Adrenal gland (tissue), 19 donors: ENCODE measurements at regions of chr10 and their contacts with region 1.

Region 1: DNA sequence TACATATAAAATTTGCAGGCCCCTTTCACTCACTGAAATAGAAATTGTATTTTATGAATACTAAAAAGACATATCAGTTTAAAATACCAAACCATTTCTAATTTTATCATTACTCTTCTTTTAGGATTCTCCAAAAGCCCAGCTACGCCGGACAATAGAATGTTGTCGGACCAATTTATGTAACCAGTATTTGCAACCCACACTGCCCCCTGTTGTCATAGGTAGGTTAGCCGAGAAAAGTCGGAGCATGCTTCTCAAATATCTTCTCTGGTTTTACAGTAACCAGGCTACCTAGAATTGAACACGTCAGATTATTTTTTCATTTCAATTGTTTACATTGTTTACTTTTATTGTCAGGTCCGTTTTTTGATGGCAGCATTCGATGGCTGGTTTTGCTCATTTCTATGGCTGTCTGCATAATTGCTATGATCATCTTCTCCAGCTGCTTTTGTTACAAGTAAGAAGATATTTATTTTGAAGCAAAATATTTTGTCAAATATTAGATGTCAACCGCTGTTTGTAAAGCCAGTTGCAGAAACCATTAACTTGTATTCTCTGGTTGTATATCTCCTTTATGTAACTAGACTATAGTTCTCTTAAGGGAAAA is 57.6 kb downstream of the MMRN2 start:
- DNase-seq: peak; percentile 52 to 89 (median 76)
- H3K4me3 ChIP-seq: no peak overlapping the region
- H3K27ac ChIP-seq: no peak overlapping the region
- H3K4me1 ChIP-seq: peaks cover 11 to 15% of the 10 kb centered on the region in 2 donors
- H3K27me3 ChIP-seq: no peaks in the 10 kb centered on the region
- CTCF ChIP-seq: peak; percentile 60 to 88 (median 76)
- POLR2A ChIP-seq: no peak

Region 2: DNA sequence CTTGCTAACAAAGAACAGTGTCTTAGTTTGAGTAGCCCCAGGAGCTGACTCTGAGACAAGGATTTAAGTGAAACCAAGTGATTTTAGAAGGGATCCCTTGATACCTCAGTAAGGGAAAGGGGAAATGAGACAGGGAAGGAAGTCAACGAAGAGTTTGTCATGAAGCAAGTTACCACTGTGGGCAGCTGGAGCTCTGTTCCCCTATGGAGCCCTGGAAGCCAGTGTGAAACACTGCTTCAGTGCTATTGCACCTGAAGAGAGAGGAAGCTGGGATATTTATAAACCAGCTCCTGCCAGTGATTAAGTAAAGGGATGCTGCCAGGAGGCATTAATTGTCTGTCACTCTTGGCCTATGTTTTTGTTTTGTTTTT is 319.3 kb before region 1 on chr10:
- intact Hi-C with region 1: no loop called
- DNase-seq: peak in 1 of 7 donors; percentile 11
- H3K4me3 ChIP-seq: no peak overlapping the region
- H3K27ac ChIP-seq: peak overlapping the region in 1 of 5 donors; percentile 43
- H3K4me1 ChIP-seq: no peaks in the 10 kb centered on the region
- H3K27me3 ChIP-seq: no peaks in the 10 kb centered on the region
- CTCF ChIP-seq: no peak
- POLR2A ChIP-seq: no peak

Region 3: GRCh38 chr10:86693721-86694369 is 205.9 kb before region 1 on chr10:
- intact Hi-C with region 1: loop called (anchors 2 to 5 kb)
- DNase-seq: peak in 5 of 7 donors; percentile 40 to 66 (median 56)
- H3K4me3 ChIP-seq: no peak overlapping the region
- H3K27ac ChIP-seq: no peak overlapping the region
- H3K4me1 ChIP-seq: no peaks in the 10 kb centered on the region
- H3K27me3 ChIP-seq: no peaks in the 10 kb centered on the region
- CTCF ChIP-seq: peak; percentile 44 to 61 (median 57)
- POLR2A ChIP-seq: no peak

Region 4: GRCh38 chr10:86706401-86706841 is 193.4 kb before region 1 on chr10:
- intact Hi-C with region 1: loop called in 1 of 2 experiments (anchors 5 kb)
- DNase-seq: no peak
- H3K4me3 ChIP-seq: no peak overlapping the region
- H3K27ac ChIP-seq: no peak overlapping the region
- H3K4me1 ChIP-seq: peaks cover 0 to 5% of the 10 kb centered on the region in 2 donors
- H3K27me3 ChIP-seq: no peaks in the 10 kb centered on the region
- CTCF ChIP-seq: no peak
- POLR2A ChIP-seq: no peak